ENCODE measurements at regions of chr5 and their contacts with region 1.

Region 1: DNA sequence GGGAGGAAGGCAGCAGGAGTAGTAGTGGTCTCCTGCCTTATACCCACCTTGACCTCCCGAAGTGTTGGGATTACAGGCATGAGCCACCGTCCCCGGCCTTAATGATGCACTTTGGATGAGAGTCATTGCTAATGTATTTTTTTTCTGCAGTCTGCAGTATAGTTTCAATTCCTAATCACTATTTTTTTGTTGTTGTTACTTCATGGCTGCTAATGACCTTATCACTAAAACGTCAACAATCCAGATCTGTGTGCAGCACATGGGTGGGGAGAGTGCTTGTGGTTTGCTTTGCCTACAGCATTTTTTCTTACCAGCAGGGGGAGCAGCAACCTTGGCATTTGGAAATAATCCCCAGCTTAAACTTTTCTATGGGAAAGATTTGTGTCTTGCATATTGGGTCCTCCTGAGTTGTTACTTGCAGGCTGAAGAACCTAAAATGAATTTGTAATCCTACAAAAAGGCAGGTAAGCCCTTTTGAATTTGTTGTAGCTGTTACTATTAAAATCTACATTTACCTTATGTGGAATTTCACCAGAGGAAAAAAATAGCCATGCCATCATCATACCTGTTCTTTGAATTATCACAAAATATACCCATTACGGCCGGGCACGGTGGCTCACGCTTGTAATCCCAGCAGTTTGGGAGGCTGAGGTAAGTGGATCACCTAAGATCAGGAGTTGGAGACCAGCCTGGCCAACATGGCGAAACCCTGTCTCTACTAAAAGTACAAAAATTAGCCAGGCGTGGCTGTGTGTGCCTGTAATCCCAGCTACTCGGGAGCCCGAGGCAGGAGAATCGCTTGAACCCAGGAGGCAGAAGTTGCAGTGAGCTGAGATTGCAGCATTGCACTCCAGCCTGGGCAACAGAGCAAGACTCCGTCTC is 6.3 kb upstream of the MED7 start:
- DNase-seq: peak; percentile 68 to 91 (median 85)
- ATAC-seq: peak; percentile 86
- H3K4me3 ChIP-seq: no peak overlapping the region
- H3K4me3 Mint-ChIP-seq: no peak overlapping the region
- H3K27ac ChIP-seq: no peak overlapping the region
- H3K27ac Mint-ChIP-seq: peak overlapping the region; percentile 76
- H3K4me1 ChIP-seq: peaks cover 33% of the 10 kb centered on the region
- H3K4me1 Mint-ChIP-seq: peaks cover 37% of the 10 kb centered on the region
- H3K27me3 ChIP-seq: no peaks in the 10 kb centered on the region
- H3K27me3 Mint-ChIP-seq: no peaks in the 10 kb centered on the region
- CTCF ChIP-seq: peak; percentile 82

Region 2: DNA sequence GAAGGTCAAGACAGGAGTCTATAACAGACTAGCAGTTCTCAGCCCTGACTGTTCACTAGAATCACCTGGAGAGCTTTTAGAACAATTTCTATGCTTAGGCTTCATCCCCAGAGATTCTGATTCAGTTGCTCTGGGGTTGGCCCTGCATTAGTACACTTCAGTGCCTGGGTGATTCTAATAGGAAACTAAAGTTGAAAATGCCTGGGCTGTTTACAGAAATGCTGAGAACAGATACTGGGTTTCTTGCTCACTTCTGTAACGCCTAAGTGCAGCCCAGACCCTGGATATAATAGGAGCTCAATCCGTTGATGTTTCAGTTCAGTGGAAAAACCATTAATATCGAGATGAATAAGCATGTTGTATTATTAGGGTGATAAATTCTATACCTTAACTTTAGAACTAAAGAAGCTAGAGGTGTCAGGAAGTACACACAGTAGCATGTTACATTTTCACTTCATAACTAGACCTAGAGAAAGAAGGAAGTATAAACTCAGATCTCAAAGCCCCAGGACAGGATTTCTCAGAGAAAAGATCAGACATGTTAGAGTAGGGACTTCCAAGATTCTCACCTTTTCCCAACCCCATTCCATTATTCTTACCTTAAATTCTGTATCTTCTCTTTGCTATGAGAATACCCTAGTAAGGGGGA is 60.5 kb before region 1 on chr5:
- CTCF ChIA-PET with region 1: no interaction called
- POLR2A ChIA-PET with region 1: no interaction called
- intact Hi-C with region 1: no loop called
- DNase-seq: no peak
- ATAC-seq: no peak
- H3K4me3 ChIP-seq: no peak overlapping the region
- H3K4me3 Mint-ChIP-seq: no peak overlapping the region
- H3K27ac ChIP-seq: no peak overlapping the region
- H3K27ac Mint-ChIP-seq: peak overlapping the region; percentile 41
- H3K4me1 ChIP-seq: no peaks in the 10 kb centered on the region
- H3K4me1 Mint-ChIP-seq: peaks cover 4% of the 10 kb centered on the region
- H3K27me3 ChIP-seq: no peaks in the 10 kb centered on the region
- H3K27me3 Mint-ChIP-seq: no peaks in the 10 kb centered on the region
- CTCF ChIP-seq: no peak

Region 3: DNA sequence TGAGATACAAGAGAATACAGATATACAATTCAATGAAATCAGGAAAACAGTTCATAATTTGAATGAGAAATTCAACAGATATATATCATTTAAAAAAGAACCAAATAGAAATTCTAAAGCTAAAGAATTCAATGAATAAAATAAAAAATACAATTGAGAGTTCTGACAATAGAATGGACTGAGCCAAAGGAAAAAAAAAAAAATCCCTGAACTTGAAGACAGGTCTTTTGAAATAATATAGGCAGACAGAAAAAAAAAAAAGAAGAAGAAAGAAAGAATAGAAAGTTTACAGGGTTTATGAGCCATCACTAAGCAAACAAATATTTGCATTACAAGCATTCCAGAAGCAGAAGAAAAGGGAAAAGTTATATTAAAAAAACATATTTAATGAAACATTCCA is 27.3 kb before region 1 on chr5:
- CTCF ChIA-PET with region 1: no interaction called
- POLR2A ChIA-PET with region 1: no interaction called
- intact Hi-C with region 1: no loop called
- DNase-seq: no peak
- ATAC-seq: no peak
- H3K4me3 ChIP-seq: no peak overlapping the region
- H3K4me3 Mint-ChIP-seq: no peak overlapping the region
- H3K27ac ChIP-seq: no peak overlapping the region
- H3K27ac Mint-ChIP-seq: no peak overlapping the region
- H3K4me1 ChIP-seq: no peaks in the 10 kb centered on the region
- H3K4me1 Mint-ChIP-seq: peaks cover 4% of the 10 kb centered on the region
- H3K27me3 ChIP-seq: no peaks in the 10 kb centered on the region
- H3K27me3 Mint-ChIP-seq: no peaks in the 10 kb centered on the region
- CTCF ChIP-seq: no peak

Region 4: DNA sequence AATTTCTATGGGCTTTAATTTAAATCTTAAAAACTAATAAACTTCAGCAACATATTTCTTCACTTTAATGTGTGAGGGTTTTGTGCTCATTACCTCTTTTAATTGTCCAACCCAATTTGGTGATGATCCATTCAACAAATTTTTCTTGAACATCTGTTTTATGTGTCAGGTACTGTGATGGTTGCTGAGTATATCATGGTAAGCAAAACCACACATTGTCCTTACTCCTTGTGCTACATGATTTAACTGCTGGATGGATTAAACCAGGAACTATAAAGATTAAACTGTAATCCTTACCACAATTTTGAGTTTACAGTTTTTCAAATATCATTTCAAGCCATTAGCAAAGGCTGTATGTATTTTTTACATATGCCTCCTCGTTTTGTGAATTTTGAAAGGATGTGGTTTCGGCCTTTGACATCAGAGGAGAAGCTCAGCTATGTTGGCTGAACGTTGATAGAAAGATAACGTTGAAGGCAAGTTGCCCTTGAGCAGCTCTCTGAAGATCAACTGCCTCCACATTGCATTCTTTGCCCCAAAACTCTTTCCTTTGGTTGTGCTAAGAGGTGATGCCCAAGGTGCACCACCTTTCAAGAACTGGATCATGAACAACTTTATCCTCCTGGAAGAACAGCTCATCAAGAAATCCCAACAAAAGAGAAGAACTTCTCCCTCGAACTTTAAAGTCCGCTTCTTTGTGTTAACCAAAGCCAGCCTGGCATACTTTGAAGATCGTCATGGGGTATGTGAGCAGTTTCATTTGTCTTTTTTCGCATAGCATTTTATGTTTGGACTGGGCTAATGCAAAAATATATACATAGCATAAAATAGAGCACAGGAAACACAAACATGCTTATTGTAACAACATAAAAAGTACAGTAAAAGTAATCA is 31.6 kb after region 1 on chr5 and contains the start of gene ITK:
- CTCF ChIA-PET with region 1: interaction called, 11 read pairs
- POLR2A ChIA-PET with region 1: interaction called, 13 read pairs
- intact Hi-C with region 1: loop called (anchors 1 to 2 kb)
- DNase-seq: peak in 5 of 9 experiments; percentile 39 to 90 (median 73)
- ATAC-seq: peak; percentile 76
- H3K4me3 ChIP-seq: peak within 1 kb of the TSS; percentile 78 to 84
- H3K4me3 Mint-ChIP-seq: peak within 1 kb of the TSS; percentile 93
- H3K27ac ChIP-seq: peak within 1 kb of the TSS; percentile 79 to 80
- H3K27ac Mint-ChIP-seq: peak within 1 kb of the TSS; percentile 95
- H3K4me1 ChIP-seq: peaks cover 39% of the 10 kb centered on the region
- H3K4me1 Mint-ChIP-seq: peaks cover 55% of the 10 kb centered on the region
- H3K27me3 ChIP-seq: no peaks in the 10 kb centered on the region
- H3K27me3 Mint-ChIP-seq: no peaks in the 10 kb centered on the region
- CTCF ChIP-seq: no peak
- total RNA-seq, gene ITK: 222 to 231 TPM

Region 5: GRCh38 chr5:157204765-157205164 is 55.8 kb after region 1 on chr5:
- CTCF ChIA-PET with region 1: interaction called, 18 read pairs
- POLR2A ChIA-PET with region 1: interaction called, 12 read pairs
- intact Hi-C with region 1: no loop called
- DNase-seq: peak in 3 of 9 experiments; percentile 41 to 81 (median 60)
- ATAC-seq: peak; percentile 53
- H3K4me3 ChIP-seq: peak overlapping the region in 1 of 2 experiments; percentile 35
- H3K4me3 Mint-ChIP-seq: peak overlapping the region; percentile 54
- H3K27ac ChIP-seq: peak overlapping the region; percentile 34 to 74
- H3K27ac Mint-ChIP-seq: peak overlapping the region; percentile 92
- H3K4me1 ChIP-seq: peaks cover 96% of the 10 kb centered on the region
- H3K4me1 Mint-ChIP-seq: peaks cover 85% of the 10 kb centered on the region
- H3K27me3 ChIP-seq: no peaks in the 10 kb centered on the region
- H3K27me3 Mint-ChIP-seq: no peaks in the 10 kb centered on the region
- CTCF ChIP-seq: no peak

Region 6: GRCh38 chr5:157233515-157233914 is 84.5 kb after region 1 on chr5:
- CTCF ChIA-PET with region 1: interaction called, 16 read pairs
- POLR2A ChIA-PET with region 1: interaction called, 7 read pairs
- intact Hi-C with region 1: loop called in 1 of 2 experiments (anchors 1 kb)
- DNase-seq: peak in 3 of 9 experiments; percentile 33 to 85 (median 69)
- ATAC-seq: peak; percentile 88
- H3K4me3 ChIP-seq: no peak overlapping the region
- H3K4me3 Mint-ChIP-seq: no peak overlapping the region
- H3K27ac ChIP-seq: peak overlapping the region; percentile 23 to 52
- H3K27ac Mint-ChIP-seq: peak overlapping the region; percentile 86
- H3K4me1 ChIP-seq: peaks cover 48% of the 10 kb centered on the region
- H3K4me1 Mint-ChIP-seq: peaks cover 62% of the 10 kb centered on the region
- H3K27me3 ChIP-seq: no peaks in the 10 kb centered on the region
- H3K27me3 Mint-ChIP-seq: no peaks in the 10 kb centered on the region
- CTCF ChIP-seq: no peak

Region 7: DNA sequence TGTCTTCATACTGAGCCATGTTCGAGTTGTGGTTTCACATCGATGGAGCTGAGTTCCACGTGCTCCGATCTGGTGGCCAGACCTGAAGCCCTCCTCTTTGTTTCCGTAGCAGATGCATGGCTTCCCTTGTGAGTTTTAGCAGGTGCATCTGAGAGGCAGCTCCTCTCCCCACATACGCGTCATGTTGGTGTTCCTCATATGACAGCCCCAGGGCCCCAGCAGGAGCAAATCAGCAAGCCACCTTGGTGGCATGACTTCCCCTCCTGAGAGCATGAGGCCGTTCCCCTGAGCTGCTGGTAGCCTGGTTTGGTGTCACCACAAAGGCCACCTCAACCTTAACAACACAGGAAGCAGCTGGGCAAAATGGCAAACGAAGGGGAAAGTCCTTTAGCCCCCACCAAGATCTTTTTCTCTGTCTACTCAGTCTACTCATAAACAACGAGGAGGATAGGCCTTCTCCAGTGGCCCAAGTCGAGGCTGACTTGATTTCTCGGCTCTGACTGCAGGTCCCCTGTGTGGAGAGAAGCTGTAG is 122.8 kb after region 1 on chr5:
- CTCF ChIA-PET with region 1: interaction called, 11 read pairs
- POLR2A ChIA-PET with region 1: interaction called, 35 read pairs
- intact Hi-C with region 1: no loop called
- DNase-seq: peak; percentile 73 to 98 (median 88)
- ATAC-seq: peak; percentile 87
- H3K4me3 ChIP-seq: peak overlapping the region in 1 of 2 experiments; percentile 31
- H3K4me3 Mint-ChIP-seq: peak overlapping the region; percentile 56
- H3K27ac ChIP-seq: peak overlapping the region; percentile 79 to 82
- H3K27ac Mint-ChIP-seq: peak overlapping the region; percentile 98
- H3K4me1 ChIP-seq: peaks cover 89% of the 10 kb centered on the region
- H3K4me1 Mint-ChIP-seq: peaks cover 89% of the 10 kb centered on the region
- H3K27me3 ChIP-seq: no peaks in the 10 kb centered on the region
- H3K27me3 Mint-ChIP-seq: no peaks in the 10 kb centered on the region
- CTCF ChIP-seq: no peak